GM18951 (cell line): ENCODE measurements at regions of chr3 and their contacts with region 1.

Region 1: GRCh38 chr3:16290007-16290826 is 25.2 kb downstream of the OXNAD1 start:
- POLR2A ChIP-seq: no peak

Region 2: GRCh38 chr3:15997274-15997943 is 292.8 kb before region 1 on chr3:
- in situ Hi-C with region 1: no loop called
- POLR2A ChIP-seq: no peak

Region 3: GRCh38 chr3:16550676-16551341 is 260.6 kb after region 1 on chr3:
- in situ Hi-C with region 1: loop called (anchors 5 kb)
- POLR2A ChIP-seq: no peak

Region 4: DNA sequence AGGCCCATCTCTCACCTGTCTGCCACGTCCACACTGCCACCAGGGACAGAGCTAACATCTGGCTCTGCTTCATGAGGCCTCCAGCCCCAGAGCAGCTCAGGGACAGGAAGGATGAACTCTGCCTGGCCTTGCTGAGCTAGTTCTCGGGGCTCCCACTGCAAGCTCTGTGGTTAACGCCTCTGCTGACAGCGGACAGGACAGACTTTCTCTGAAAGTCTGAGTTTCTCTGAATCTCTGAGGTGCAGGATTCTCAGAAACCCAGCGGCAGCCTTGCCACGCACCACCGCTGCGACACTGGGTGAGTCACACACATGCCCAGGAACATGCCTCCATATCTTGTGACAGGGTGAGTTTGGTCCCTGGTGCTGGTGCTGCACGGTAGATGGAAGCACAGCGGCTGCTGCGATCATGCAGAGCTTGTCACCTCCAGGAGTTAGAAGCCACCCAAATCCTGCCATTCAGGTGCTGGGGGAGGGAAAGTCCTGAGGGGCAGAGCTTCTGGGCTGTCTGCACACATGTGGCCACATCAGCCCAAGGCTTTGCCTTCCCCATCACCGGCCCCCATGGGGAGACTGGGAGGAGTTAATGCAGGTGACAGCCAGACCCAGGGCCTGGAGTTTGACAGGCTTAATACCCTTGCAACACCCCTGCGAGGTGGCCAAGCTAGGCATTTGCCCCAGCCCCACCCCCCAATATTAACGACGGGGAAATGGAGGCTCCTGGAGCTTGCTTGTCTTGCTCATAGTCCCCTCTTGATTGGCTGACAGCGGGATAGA is 861.6 kb after region 1 on chr3:
- in situ Hi-C with region 1: no loop called
- POLR2A ChIP-seq: no peak

Region 5: DNA sequence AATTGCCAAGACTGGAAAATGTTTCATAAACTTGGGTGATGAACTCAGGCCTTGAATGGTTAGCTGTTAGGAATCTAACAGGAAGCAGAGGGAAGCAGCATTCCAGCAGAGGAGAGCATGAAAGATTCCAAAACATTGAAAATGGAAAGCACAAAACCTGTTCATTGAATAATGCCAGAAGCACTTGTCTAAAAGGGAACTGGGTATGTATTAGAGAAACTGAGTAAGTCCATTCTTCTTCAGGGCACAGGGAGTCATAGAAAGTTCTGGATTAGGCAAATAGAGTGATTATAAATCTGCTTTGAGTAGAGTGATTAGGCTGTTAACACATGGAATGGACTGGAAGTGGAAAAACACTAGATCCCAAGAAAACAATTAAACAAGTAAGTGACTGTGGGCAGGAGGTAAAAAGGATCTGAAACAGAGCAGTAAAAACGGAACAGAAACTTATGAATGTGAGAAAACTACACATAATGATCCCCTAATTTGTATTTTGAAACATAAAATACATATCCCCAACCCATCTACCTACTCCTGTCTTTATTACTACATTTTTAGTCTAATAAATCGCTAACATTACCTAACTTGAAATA is 1108.8 kb after region 1 on chr3:
- in situ Hi-C with region 1: loop called (anchors 25 kb)
- POLR2A ChIP-seq: no peak